Calu3 (cell line): ENCODE measurements at regions of chr4 and their contacts with region 1.

Region 1: GRCh38 chr4:139633661-139634060 is 32.0 kb upstream of the MGST2 start:
- DNase-seq: peak; percentile 21
- H3K4me3 Mint-ChIP-seq: peak overlapping the region; percentile 65
- H3K27ac Mint-ChIP-seq: no peak overlapping the region
- H3K4me1 Mint-ChIP-seq: peaks cover 55% of the 10 kb centered on the region
- H3K27me3 Mint-ChIP-seq: no peaks in the 10 kb centered on the region
- CTCF ChIP-seq: peak; percentile 21

Region 2: GRCh38 chr4:139410312-139410711 is 223.3 kb before region 1 on chr4:
- CTCF ChIA-PET with region 1: no interaction called
- intact Hi-C with region 1: loop called (anchors 5 kb)
- DNase-seq: no peak
- H3K4me3 Mint-ChIP-seq: no peak overlapping the region
- H3K27ac Mint-ChIP-seq: no peak overlapping the region
- H3K4me1 Mint-ChIP-seq: peaks cover 9% of the 10 kb centered on the region
- H3K27me3 Mint-ChIP-seq: no peaks in the 10 kb centered on the region
- CTCF ChIP-seq: no peak

Region 3: GRCh38 chr4:139420652-139421051 is 213.0 kb before region 1 on chr4:
- CTCF ChIA-PET with region 1: no interaction called
- intact Hi-C with region 1: no loop called
- DNase-seq: no peak
- H3K4me3 Mint-ChIP-seq: no peak overlapping the region
- H3K27ac Mint-ChIP-seq: no peak overlapping the region
- H3K4me1 Mint-ChIP-seq: no peaks in the 10 kb centered on the region
- H3K27me3 Mint-ChIP-seq: no peaks in the 10 kb centered on the region
- CTCF ChIP-seq: no peak

Region 4: GRCh38 chr4:139540632-139541031 is 93.0 kb before region 1 on chr4:
- CTCF ChIA-PET with region 1: no interaction called
- intact Hi-C with region 1: no loop called
- DNase-seq: no peak
- H3K4me3 Mint-ChIP-seq: no peak overlapping the region
- H3K27ac Mint-ChIP-seq: no peak overlapping the region
- H3K4me1 Mint-ChIP-seq: no peaks in the 10 kb centered on the region
- H3K27me3 Mint-ChIP-seq: no peaks in the 10 kb centered on the region
- CTCF ChIP-seq: no peak

Region 5: DNA sequence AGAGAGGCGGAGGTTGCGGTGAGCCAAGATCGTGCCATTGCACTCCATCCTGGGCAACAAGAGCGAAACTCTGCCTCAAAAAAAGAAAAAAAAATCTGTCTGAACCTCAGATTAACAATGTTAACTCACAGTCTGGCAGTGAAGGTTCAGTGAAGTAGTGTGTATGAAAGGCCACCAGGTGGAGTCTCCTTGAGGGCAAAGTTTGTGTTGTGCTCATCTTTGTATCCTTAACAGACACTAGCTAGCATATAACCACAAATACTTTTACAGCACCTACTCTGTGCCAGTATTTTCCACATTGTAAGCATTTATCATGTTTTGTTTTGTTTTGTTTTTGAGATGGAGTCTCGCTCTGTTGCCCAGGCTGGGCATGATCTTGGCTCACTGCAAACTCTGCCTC is 14.0 kb before region 1 on chr4:
- CTCF ChIA-PET with region 1: interaction called, 6 read pairs
- intact Hi-C with region 1: loop called (anchors 1 kb)
- DNase-seq: peak; percentile 8
- H3K4me3 Mint-ChIP-seq: no peak overlapping the region
- H3K27ac Mint-ChIP-seq: no peak overlapping the region
- H3K4me1 Mint-ChIP-seq: no peaks in the 10 kb centered on the region
- H3K27me3 Mint-ChIP-seq: no peaks in the 10 kb centered on the region
- CTCF ChIP-seq: peak; percentile 19